Dorsolateral prefrontal cortex (tissue), 120 donors: ENCODE measurements at regions of chr1 and their contacts with region 1.

Region 1: DNA sequence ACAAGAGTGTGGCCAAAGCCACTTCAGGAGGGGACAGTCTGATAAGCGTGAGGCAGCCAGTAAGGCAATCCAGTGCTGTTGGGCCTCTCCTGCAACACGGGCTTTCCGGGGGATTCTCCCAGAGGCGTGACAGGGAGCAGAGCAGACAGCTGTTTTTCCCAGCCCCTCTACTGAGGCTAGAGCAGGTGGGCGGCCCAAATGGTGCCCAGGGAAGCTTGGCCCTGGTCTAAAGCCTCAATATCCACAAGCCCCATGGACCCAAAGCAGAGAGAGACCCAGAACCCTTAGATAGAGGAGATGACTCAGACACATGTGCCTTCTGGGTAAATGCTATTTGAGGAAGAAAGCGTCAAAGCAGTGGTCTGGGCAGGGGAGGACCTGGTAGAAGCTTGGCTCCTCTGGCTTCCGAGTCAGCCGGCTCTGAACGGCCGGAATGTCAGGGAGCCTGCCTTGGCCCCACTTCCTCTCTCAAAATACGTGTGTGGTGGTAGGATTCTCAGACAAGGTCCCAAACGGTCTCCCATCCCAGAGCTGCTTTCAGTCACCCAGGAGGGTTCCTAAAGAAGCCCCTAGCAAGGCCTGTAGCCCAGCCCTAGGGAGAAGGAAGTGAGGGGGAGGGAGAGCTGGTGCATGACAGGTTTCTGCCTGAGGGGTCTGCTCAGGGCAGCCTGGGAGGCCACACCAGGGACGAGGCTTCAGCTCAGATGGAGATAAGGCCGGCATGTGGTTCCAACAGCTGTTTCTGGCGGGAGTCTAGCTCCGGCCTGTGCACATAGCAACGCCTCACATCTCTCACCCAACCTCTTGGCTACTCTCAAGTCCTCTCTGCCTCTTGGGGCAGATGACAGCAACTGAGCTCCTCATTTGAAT is 28.8 kb downstream of the PIK3C2B start:
- DNase-seq: peak in 3 of 10 donors; percentile 28 to 58 (median 39)
- H3K4me3 ChIP-seq: peak overlapping the region in 8 of 59 donors; percentile 2 to 38 (median 16)
- H3K27ac ChIP-seq: peak overlapping the region; percentile 85 to 100 (median 98)
- H3K27me3 ChIP-seq: no peaks in the 10 kb centered on the region
- CTCF ChIP-seq: no peak

Region 2: DNA sequence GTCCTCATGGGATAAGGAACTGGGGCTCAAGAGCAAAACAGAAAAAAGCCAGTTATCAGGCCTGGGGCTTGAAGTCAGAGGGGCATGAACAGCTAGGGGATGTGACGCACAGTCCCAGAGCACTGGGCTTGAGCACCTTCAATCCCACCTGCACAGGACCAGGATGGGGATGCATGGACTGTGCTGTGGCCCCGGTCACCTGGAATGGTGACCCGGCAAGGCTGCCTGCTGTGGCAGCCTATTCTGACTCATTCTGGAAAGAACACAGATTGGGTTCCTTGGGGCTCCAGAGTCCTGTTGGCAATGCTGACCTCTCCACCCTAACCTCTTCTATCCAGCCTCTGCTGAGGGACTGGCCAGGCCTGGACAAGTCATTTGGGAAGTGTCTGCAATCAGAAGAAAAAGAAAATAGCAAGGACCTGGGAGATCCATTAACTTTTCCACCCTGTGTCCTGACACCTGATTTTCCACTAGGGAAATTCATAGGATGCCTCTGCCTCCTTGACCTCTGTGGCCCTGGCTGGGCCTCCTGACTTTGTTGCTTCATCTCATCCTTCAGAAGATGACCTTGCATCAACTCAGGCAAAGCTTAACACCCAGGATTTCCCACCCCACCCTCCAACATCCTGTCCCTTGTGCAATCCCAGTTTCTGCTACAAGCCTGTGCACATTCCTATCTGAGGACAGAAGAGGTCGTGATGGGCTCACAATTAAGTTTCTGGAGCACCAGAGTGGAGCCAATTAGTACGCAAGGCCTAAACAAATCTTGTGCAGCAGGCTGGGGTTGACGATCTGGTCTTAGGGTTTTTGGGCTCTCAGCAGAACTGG is 1096.9 kb before region 1 on chr1:
- intact Hi-C with region 1: no loop called
- DNase-seq: no peak
- H3K4me3 ChIP-seq: no peak overlapping the region
- H3K27ac ChIP-seq: peak overlapping the region in 1 of 59 donors; percentile 18
- H3K27me3 ChIP-seq: no peaks in the 10 kb centered on the region
- CTCF ChIP-seq: peak in 25 of 56 donors; percentile 8 to 46 (median 20)

Region 3: GRCh38 chr1:204477036-204477740 is 11.4 kb after region 1 on chr1:
- intact Hi-C with region 1: loop called in 1 of 2 experiments (anchors 1 kb)
- DNase-seq: peak in 9 of 10 donors; percentile 45 to 89 (median 84)
- H3K4me3 ChIP-seq: peak overlapping the region in 14 of 59 donors; percentile 0 to 35 (median 14)
- H3K27ac ChIP-seq: peak overlapping the region; percentile 43 to 99 (median 93)
- H3K27me3 ChIP-seq: no peaks in the 10 kb centered on the region
- CTCF ChIP-seq: peak in 20 of 56 donors; percentile 11 to 47 (median 24)

Region 4: DNA sequence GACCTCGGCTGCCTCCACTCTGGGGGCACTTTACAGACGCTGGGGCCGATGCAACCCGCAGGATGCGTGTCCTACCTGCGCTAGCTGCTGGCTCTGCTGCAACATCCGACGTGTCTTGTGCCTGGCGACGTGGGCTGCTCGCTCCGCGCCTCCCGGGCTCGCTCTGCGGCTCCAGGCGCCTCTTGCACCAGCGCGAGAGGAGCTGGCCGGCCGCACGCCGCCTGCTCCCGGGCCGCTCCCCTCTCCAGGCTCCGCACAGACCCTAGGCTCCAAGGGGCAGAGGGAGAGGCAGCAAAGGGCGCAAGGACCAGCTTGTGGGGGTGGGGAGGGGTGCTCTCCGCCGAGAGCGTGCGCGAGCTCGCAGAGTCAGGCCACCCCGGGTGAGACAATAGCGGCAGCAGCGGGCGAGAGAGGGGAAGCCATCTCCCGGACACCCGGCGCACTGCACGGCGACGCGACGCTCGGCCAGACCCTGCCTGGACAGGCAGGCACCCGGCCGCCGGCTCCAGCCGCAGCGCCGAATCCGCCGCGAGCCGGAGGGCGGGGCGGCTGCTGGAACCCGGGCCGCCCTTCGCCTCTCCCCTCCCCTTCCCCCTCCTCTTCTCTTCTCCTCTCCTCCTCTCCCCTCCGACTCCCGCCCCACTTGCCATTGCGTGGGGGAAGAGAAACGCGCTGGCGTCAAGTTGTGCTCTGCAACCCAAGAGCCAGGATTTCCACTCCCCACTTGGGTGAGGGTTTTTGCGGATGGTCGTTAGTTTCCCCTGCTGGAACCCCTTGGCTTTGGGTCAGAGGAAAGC is 28.7 kb after region 1 on chr1 and contains the start of gene PIK3C2B:
- intact Hi-C with region 1: loop called (anchors 1 kb)
- DNase-seq: peak; percentile 67 to 89 (median 84)
- H3K4me3 ChIP-seq: peak within 1 kb of the TSS; percentile 67 to 99 (median 91)
- H3K27ac ChIP-seq: peak within 1 kb of the TSS; percentile 84 to 99 (median 97)
- H3K27me3 ChIP-seq: no peaks in the 10 kb centered on the region
- CTCF ChIP-seq: peak; percentile 2 to 68 (median 49)
- total RNA-seq, gene PIK3C2B: 38.4 to 188 (median 62.6) TPM